Prostate gland (tissue), 2 donors: ENCODE measurements at regions of chr21 and their contacts with region 1.

Region 1: GRCh38 chr21:32770871-32771523 is 558 bp downstream of the PAXBP1 start:
- DNase-seq: peak; percentile 30
- H3K4me3 ChIP-seq: peak overlapping the region; percentile 88 to 92
- H3K27ac ChIP-seq: peak overlapping the region; percentile 82 to 87
- H3K4me1 ChIP-seq: no peaks in the 10 kb centered on the region
- H3K27me3 ChIP-seq: no peaks in the 10 kb centered on the region
- CTCF ChIP-seq: no peak
- POLR2A ChIP-seq: no peak

Region 2: GRCh38 chr21:32727687-32728455 is 43.1 kb before region 1 on chr21 and contains the start of gene SYNJ1:
- intact Hi-C with region 1: loop called (anchors 5 kb)
- DNase-seq: peak; percentile 94
- H3K4me3 ChIP-seq: peak within 1 kb of the TSS; percentile 68 to 81
- H3K27ac ChIP-seq: peak within 1 kb of the TSS; percentile 86 to 87
- H3K4me1 ChIP-seq: no peaks in the 10 kb centered on the region
- H3K27me3 ChIP-seq: no peaks in the 10 kb centered on the region
- CTCF ChIP-seq: peak in 1 of 4 experiments; percentile 34
- POLR2A ChIP-seq: peak; percentile 85
- total RNA-seq, gene SYNJ1: 7.9 to 9.2 TPM